Lower leg skin (tissue), 4 donors: ENCODE measurements at regions of chr9 and their contacts with region 1.

Region 1: GRCh38 chr9:90773617-90774016 is 28.0 kb upstream of the SYK start:
- DNase-seq: no peak
- H3K4me3 ChIP-seq: no peak overlapping the region
- CTCF ChIP-seq: no peak
- POLR2A ChIP-seq: no peak

Region 2: DNA sequence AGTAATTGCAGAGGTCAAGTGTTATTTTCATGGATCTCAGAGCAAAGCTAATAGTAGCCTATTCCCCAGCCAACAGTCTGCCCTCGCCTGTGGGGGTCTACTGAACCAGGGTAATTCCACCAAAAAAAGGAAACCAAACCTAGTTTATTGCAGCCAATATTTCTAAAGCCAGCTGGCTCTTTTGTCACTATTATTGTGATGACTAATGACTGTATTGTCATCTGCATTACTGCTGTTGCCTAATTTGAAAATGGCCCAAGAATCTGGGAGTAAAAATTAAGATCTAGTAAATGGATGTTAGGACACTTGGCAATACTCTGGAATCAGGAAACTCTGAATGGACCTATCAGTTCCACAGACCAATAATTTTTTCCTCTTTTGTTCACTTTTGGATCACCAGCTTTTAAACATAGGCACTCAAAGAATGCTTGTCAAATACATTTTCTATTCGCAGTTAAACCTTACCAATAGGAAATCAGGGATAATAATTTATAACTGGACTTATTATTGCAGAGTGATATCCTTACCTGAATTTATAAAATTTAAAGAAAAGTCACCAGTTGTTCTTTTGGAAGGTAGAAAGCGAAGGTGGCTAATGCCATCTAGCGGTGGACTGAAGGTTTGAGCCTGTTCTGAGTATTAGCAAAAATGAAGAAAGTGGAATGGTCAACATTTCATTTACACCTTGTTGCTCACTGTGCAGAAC is 97.2 kb after region 1 on chr9:
- intact Hi-C with region 1: loop called (anchors 5 kb)
- DNase-seq: no peak
- H3K4me3 ChIP-seq: no peak overlapping the region
- CTCF ChIP-seq: no peak
- POLR2A ChIP-seq: no peak

Region 3: DNA sequence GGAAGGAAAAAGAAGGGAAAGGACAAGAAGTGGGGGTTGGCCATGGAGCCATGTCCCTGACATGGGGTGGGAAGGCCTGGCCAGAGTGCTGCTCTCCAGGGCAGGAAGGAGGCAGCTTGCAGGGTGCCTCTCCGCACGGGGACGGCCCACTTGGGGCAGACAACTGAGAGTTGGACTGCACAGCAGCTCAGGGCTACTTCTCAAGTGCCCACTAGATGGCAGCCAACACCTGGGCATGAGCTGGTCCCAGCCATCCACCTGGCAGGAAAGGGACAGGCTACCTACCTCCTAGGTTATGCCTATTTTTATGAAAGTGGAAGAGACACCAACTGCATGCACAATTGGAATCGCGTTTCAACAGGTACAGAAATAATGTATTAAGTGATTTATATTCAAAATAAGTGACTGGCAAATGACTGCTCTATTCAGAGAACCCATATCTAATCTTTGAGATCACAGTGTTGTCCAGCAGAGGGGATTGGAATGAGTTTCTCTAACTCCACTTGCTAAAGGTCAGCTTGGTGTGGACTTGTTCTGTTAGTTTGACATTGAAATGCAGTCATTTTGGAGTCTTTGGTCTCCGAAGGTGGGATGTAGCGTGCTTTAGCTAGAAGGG is 141.4 kb after region 1 on chr9:
- intact Hi-C with region 1: no loop called
- DNase-seq: peak in 1 of 2 donors; percentile 32
- H3K4me3 ChIP-seq: no peak overlapping the region
- CTCF ChIP-seq: peak in 2 of 3 donors; percentile 51 to 93
- POLR2A ChIP-seq: no peak